ENCODE measurements at regions of chr2 and their contacts with region 1.

Region 1: GRCh38 chr2:28958689-28959088 is 22.4 kb upstream of the TOGARAM2 start:
- DNase-seq: peak; percentile 36 to 82 (median 72)
- H3K4me3 ChIP-seq: peak overlapping the region in 49 of 59 donors; percentile 4 to 56 (median 35)
- H3K27ac ChIP-seq: peak overlapping the region in 2 of 59 donors; percentile 5 to 48
- H3K27me3 ChIP-seq: no peaks in the 10 kb centered on the region
- CTCF ChIP-seq: peak; percentile 62 to 90 (median 83)

Region 2: GRCh38 chr2:29063646-29064343 is 105.1 kb after region 1 on chr2:
- intact Hi-C with region 1: loop called in 1 of 2 experiments (anchors 10 kb)
- DNase-seq: peak in 6 of 10 donors; percentile 40 to 53 (median 47)
- H3K4me3 ChIP-seq: peak overlapping the region in 28 of 59 donors; percentile 4 to 49 (median 24)
- H3K27ac ChIP-seq: peak overlapping the region in 56 of 59 donors; percentile 18 to 98 (median 89)
- H3K27me3 ChIP-seq: no peaks in the 10 kb centered on the region
- CTCF ChIP-seq: no peak

Region 3: GRCh38 chr2:29115797-29116781 is 157.4 kb after region 1 on chr2:
- intact Hi-C with region 1: loop called in 1 of 2 experiments (anchors 10 kb)
- DNase-seq: peak; percentile 44 to 77 (median 67)
- H3K4me3 ChIP-seq: peak overlapping the region; percentile 43 to 89 (median 78)
- H3K27ac ChIP-seq: peak overlapping the region; percentile 62 to 99 (median 96)
- H3K27me3 ChIP-seq: no peaks in the 10 kb centered on the region
- CTCF ChIP-seq: peak in 5 of 56 donors; percentile 6 to 18 (median 7)

Region 4: DNA sequence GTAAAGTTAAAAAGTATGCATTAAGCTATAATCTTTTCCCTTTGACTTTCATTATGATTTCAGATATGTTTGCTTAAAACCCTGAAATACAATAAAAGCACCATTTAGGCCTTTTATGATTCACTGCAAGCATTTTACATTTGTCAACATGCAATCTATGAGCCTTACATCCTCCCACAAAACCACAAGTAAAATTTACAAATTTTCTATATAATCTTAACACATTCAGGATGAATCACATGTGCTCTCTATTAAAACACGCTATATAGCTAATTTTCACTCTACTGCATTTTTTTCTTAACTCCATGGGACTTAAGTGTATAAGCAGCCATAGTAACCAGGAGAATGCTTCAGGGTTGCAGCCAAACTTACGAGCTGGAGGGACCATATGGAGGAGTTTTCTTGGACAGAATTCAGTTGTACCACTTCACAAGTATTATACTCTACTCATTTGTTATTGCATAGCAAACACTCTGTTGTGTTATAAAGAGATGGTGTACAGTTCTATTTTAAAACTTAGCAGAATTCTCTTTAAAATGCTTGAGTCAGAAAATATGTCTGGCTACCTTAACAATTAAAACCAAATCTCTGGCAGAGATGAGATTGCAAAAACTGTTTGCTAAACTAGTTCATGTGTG is 669.5 kb after region 1 on chr2:
- intact Hi-C with region 1: no loop called
- DNase-seq: no peak
- H3K4me3 ChIP-seq: no peak overlapping the region
- H3K27ac ChIP-seq: no peak overlapping the region
- H3K27me3 ChIP-seq: peaks cover 0 to 83% (median 7%) of the 10 kb centered on the region in 45 donors
- CTCF ChIP-seq: no peak

Region 5: DNA sequence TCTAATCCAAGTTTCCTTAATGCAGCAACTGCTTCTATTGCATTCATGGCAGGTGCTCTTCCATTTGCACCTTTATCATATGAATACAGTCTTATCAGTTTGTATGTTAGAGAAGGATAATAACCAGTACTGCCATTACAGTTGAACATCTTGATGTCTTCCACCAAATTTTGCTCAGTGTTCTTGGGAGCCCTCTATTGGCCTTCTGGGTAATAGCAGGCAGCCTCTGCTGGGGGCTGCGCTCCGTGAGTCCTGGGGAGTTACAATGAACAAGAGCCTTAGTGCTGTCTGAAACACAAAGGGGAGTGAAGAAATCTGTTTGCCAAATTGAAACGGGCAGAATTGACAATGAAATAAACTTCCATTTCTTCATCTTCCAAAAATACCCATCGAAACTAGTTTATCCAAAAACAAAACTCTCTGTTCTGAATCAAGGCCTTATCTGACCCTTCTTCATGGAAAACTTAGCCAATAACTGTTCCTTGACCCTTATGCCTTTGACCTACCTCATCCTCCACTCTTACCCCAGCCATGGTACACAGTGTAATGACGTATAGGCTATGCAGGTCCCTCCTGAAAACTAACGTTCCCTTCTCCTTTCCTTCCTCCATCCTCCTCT is 882.8 kb after region 1 on chr2:
- intact Hi-C with region 1: loop called in 1 of 2 experiments (anchors 2 kb)
- DNase-seq: peak in 2 of 10 donors; percentile 10 to 60
- H3K4me3 ChIP-seq: no peak overlapping the region
- H3K27ac ChIP-seq: no peak overlapping the region
- H3K27me3 ChIP-seq: peaks cover 0 to 14% (median 0%) of the 10 kb centered on the region in 45 donors
- CTCF ChIP-seq: peak; percentile 52 to 93 (median 84)

Region 6: GRCh38 chr2:30072250-30072842 is 1113.7 kb after region 1 on chr2:
- intact Hi-C with region 1: loop called in 1 of 2 experiments (anchors 5 kb)
- DNase-seq: peak; percentile 28 to 86 (median 70)
- H3K4me3 ChIP-seq: no peak overlapping the region
- H3K27ac ChIP-seq: no peak overlapping the region
- H3K27me3 ChIP-seq: peaks cover 0 to 4% (median 0%) of the 10 kb centered on the region in 45 donors
- CTCF ChIP-seq: peak; percentile 53 to 85 (median 77)